ENCODE measurements at regions of chr1 and their contacts with region 1.

Region 1: DNA sequence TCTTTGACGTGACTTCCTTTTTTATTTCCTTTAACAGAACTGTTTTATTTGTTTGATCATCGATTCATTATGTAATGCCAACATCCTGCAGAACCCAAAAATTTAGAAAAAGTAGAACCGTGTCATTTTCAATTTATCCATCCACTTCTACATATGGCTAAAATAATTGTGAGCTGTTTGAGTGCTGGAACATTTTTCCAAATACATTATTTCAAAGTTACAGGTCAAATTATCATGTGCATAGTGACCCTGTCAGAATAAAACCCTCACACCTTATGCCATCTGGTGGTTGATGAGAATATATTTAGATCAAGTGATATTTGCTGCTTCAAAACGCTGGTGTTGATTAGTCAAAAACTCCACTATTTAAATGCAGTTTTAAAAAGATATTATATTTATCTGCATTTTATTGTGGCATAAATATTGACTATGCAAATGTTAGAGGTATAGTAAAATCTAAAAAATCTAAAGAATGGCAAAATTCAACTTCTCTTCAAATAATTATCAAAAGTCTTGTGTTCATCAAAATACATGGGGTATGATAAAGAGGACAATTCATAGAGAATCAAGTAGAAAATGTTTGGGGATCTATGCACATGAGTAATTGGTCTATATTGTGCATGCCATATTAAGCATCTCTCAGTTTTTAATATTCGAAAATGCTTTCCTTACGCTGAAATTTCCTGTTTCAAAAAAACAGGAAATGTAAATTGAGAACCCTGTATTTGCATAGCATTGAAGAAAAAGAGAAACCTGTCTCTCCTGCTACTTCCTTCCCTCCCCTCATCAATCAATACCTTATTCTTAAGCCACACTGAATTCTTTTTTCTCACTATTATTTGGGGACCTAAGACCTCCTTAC is 39.7 kb downstream of the UBE2U start:
- DNase-seq: peak in 1 of 2 experiments; percentile 47
- ATAC-seq: peak in 1 of 2 experiments; percentile 66; a peak in 2 of 6 replicates
- H3K4me3 ChIP-seq: no peak overlapping the region
- H3K27ac ChIP-seq: no peak overlapping the region; a peak in 1 of 6 replicates
- H3K4me1 ChIP-seq: peaks cover 4% of the 10 kb centered on the region; the same call in 1 of the 3 replicates
- CTCF ChIP-seq: peak; percentile 74
- EP300 ChIP-seq: no peak
- POLR2A ChIP-seq: no peak
- RAD21 ChIP-seq: peak; percentile 71 to 79

Region 2: DNA sequence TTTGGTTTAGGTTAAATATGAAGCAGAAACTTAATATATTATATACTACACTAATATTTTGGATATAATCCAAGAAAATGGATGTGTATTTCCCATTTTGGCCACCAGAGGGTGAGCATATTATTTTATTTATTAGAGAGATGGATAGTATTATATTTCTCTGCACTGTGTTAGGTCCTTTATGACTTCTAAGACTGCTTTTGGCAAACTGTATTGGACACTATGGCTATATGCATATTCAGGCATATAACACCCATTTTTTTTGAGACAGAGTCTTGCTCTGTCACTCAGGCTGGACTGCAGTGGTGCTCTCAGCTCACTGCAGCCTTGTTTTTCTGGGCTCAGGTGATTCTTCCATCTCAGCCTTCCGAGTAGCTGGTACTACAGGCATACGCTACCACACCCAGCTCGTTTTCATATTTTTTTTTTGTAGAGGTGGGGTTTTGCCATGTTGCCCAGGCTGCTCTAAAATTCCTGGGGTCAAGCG is 667.7 kb before region 1 on chr1:
- CTCF ChIA-PET with region 1: interaction called, 11 read pairs
- POLR2A ChIA-PET with region 1: no interaction called
- DNase-seq: peak in 1 of 2 experiments; percentile 12
- ATAC-seq: peak in 1 of 2 experiments; percentile 36; a peak in 1 of 6 replicates
- H3K4me3 ChIP-seq: no peak overlapping the region
- H3K27ac ChIP-seq: no peak overlapping the region
- H3K4me1 ChIP-seq: no peaks in the 10 kb centered on the region
- CTCF ChIP-seq: peak; percentile 63
- EP300 ChIP-seq: no peak
- POLR2A ChIP-seq: no peak
- RAD21 ChIP-seq: peak; percentile 47 to 52

Region 3: DNA sequence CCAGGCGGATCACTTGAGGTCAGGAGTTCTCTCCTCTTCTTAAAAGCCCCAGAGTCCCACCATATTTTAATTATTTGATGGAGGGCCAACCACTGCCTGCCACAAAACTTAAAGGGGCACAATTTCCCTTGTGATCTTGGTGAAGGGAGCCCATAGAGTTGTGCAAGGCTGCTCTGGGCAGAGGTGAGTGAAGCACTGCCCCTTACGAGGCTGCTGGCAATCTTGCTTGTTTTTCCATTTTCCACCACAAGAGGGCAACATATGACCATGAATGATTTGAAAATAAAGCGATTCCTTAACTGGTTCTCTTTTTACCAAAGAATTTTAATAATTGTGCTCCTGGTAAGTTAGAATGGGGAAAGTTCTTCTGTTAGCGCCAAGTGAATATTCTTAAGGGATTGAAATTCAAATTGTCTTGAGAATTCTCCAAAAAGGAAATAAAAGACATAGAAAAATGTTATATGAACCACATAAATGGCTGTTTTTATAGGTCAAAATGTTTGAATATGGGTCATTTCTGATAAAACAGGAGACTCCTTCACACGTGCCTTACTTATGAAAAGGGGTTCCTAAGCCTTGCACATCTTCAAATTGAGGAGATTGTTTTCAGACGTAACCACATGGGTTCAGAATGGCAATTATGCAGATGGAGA is 627.2 kb before region 1 on chr1:
- CTCF ChIA-PET with region 1: interaction called, 17 read pairs
- POLR2A ChIA-PET with region 1: no interaction called
- DNase-seq: peak; percentile 38 to 60
- ATAC-seq: peak; percentile 64 to 83; a peak in 5 of 6 replicates
- H3K4me3 ChIP-seq: no peak overlapping the region
- H3K27ac ChIP-seq: peak overlapping the region; percentile 3 to 29; a peak in 2 of 6 replicates
- H3K4me1 ChIP-seq: peaks cover 16% of the 10 kb centered on the region
- CTCF ChIP-seq: peak; percentile 72
- EP300 ChIP-seq: no peak
- POLR2A ChIP-seq: no peak
- RAD21 ChIP-seq: peak; percentile 82 to 88

Region 4: GRCh38 chr1:63621698-63622097 is 621.4 kb before region 1 on chr1:
- CTCF ChIA-PET with region 1: interaction called, 17 read pairs
- POLR2A ChIA-PET with region 1: no interaction called
- DNase-seq: no peak
- ATAC-seq: no peak
- H3K4me3 ChIP-seq: no peak overlapping the region
- H3K27ac ChIP-seq: no peak overlapping the region
- H3K4me1 ChIP-seq: peaks cover 16% of the 10 kb centered on the region
- CTCF ChIP-seq: no peak
- EP300 ChIP-seq: no peak
- POLR2A ChIP-seq: no peak
- RAD21 ChIP-seq: no peak

Region 5: GRCh38 chr1:63674238-63674864 is 568.8 kb before region 1 on chr1:
- CTCF ChIA-PET with region 1: interaction called, 12 read pairs
- POLR2A ChIA-PET with region 1: no interaction called
- DNase-seq: peak; percentile 80 to 84
- ATAC-seq: peak; percentile 99
- H3K4me3 ChIP-seq: no peak overlapping the region
- H3K27ac ChIP-seq: peak overlapping the region; percentile 81 to 86
- H3K4me1 ChIP-seq: peaks cover 17% of the 10 kb centered on the region
- CTCF ChIP-seq: peak; percentile 76
- EP300 ChIP-seq: no peak
- POLR2A ChIP-seq: no peak
- RAD21 ChIP-seq: peak; percentile 91 to 93

Region 6: DNA sequence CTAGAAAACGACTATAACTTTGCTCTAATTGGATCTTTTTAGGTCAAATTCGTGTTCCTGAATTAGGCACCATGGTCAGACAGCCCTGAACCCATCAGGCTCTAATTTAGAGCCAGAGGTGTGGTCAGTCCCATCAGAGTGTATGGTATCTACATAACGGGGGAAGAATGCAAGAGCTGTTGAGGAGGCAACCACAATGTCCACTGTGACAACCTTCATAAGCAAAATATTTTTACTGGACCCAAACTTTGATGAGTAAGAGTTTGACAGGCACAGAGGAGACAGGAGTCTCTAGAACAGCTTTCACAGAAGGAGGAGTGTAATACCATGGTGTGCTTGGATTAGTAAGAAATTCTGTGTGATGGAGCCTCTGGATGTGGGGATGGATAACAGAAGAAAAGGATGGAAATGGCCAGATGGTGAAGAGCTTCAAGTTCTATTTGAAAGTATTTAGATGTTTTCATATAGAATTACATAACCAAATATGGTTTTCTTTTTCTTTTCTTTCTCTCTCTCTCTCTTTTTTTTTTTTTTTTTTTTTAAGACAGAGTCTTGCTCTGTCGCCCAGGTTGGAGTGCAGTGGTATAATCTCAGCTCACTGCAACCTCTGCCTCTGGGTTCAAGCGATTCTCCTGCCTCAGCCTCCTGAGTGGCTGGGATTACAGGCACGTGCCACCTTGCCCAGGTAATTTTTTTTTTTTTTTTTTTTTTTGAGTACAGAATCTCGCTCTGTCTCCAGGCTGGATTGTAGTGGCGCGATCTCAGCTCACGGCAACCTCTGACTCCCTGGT is 14.8 kb before region 1 on chr1:
- CTCF ChIA-PET with region 1: interaction called, 12 read pairs
- POLR2A ChIA-PET with region 1: no interaction called
- DNase-seq: no peak
- ATAC-seq: no peak
- H3K4me3 ChIP-seq: no peak overlapping the region
- H3K27ac ChIP-seq: no peak overlapping the region
- H3K4me1 ChIP-seq: no peaks in the 10 kb centered on the region
- CTCF ChIP-seq: no peak
- EP300 ChIP-seq: no peak
- POLR2A ChIP-seq: no peak
- RAD21 ChIP-seq: no peak

Region 7: DNA sequence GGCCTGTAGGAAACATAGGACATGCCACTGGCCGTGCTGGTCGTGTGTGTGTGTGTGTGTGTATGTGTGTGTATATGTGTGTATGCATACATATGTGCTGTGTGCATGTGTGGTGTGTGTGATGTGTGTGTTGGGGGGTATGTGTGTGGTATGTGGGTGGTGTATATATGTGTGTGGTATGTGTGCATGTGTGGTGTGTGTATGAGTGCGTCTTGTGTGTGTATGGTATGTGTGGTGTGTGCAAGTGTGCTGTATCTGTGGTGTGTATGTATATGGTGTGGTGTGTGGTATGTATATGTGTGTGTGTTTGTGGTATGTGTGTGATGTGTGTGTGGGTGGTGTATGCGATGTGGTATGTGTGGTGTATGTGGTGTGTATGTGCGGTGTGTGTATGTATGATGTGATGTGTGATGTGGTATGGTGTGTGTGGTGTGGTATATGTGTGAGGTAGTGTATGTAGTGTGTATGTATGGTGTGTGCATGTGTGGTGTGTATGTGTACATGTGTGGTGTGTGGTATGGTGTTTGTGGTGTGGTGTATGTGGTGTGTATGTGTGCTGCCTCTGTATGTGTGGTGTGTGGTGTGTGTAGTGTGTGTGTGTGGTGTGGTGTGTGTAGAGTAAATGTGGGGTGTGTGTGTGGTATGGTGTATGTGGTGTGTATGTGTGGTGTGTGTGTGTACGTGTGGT is 106.0 kb after region 1 on chr1:
- CTCF ChIA-PET with region 1: no interaction called
- POLR2A ChIA-PET with region 1: no interaction called
- DNase-seq: no peak
- ATAC-seq: no peak
- H3K4me3 ChIP-seq: no peak overlapping the region
- H3K27ac ChIP-seq: no peak overlapping the region
- H3K4me1 ChIP-seq: peaks cover 18% of the 10 kb centered on the region
- CTCF ChIP-seq: no peak
- EP300 ChIP-seq: no peak
- POLR2A ChIP-seq: no peak
- RAD21 ChIP-seq: no peak